ENCODE measurements at regions of chr22 and their contacts with region 1.

Region 1: DNA sequence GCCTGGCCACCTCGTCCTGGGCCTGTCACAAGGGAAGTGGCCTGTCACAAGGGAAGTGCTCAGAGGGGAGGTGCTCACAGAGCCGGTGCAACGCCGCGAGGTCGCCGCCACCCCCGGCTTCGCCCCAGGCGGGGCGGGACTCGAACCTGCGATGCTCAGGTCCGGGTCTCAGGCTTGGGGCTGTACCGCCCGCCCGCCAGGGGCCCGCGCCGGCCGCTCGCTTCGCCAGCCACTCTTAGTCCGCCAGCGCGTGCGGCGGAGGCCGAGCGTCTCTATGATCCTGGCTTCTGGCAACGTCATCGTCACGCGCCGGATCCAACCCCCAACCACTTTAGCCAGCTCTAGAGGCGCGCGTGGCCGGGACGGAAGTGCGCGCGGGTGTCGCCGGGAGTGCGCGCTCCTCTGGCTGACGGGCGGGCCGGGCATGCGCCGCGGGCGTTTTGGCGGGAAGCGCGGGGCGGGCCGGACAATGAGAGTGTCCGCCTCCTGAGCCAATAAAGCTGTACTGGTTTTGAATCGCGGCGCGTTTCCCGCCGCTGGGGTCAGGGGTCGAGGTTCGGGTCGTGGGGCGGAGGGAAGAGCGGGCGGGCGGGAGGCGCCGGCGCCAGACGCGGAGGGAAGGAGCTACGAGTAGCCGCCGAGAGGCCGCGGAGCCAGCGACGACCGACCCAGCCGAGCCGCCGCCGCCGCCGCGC is at the start of gene TRMT2A:
- DNase-seq: peak; percentile 93 to 98 (median 97)
- ATAC-seq: peak; percentile 93
- H3K4me3 ChIP-seq: peak within 1 kb of the TSS; percentile 96
- H3K4me3 Mint-ChIP-seq: peak within 1 kb of the TSS; percentile 72 to 98 (median 90)
- H3K27ac ChIP-seq: peak within 1 kb of the TSS; percentile 96
- H3K27ac Mint-ChIP-seq: peak within 1 kb of the TSS; percentile 80 to 97 (median 95)
- H3K4me1 ChIP-seq: peaks cover 23 to 24% of the 10 kb centered on the region in 2 donors
- H3K4me1 Mint-ChIP-seq: peaks cover 20 to 48% (median 39%) of the 10 kb centered on the region in 7 donors
- H3K27me3 ChIP-seq: no peaks in the 10 kb centered on the region
- H3K27me3 Mint-ChIP-seq: peaks cover 0 to 2% (median 0%) of the 10 kb centered on the region in 5 donors
- total RNA-seq, gene TRMT2A: 92.0 to 134 (median 95.8) TPM

Region 2: DNA sequence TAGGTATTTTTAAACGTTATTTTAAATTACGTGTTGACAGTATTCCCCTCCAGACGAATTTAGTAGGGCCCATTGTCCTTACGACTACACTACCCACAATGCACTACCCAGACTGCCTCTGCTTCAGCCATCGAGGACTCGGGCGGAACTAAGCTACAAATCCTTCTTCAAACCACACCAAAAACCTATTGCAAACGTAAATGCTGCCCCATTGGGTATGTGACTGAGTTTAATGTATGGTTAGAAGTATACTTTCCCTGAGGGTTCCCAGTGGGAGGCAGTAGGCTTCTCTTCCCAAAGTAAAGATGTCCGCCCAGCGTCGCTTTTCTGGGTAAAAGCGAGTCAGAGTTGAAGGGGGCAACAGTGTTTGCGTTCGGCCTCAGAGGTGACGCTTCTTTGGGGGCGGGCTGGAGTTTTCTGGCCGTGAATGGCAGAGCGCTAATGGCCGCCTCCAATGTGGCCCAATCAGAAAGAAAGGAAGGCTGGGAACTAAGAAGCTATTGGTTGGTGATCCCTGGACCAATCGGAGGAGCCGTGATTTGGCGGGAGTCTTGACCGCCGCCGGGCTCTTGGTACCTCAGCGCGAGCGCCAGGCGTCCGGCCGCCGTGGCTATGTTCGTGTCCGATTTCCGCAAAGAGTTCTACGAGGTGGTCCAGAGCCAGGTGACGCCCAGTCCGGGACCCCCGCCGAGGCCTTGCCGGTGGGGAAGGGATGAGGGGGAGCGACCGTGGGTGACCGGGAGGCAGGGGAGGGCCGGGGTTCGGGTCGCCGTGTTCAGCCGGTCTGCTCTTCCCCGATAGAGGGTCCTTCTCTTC is 637.5 kb before region 1 on chr22 and contains the start of gene CDC45:
- CTCF ChIA-PET with region 1: no interaction called
- POLR2A ChIA-PET with region 1: interaction called, 3 read pairs
- intact Hi-C with region 1: loop called in 1 of 2 experiments (anchors 1 kb)
- DNase-seq: peak; percentile 75 to 96 (median 93)
- ATAC-seq: peak; percentile 94
- H3K4me3 ChIP-seq: peak within 1 kb of the TSS; percentile 85
- H3K4me3 Mint-ChIP-seq: peak within 1 kb of the TSS; percentile 87 to 98 (median 92)
- H3K27ac ChIP-seq: peak within 1 kb of the TSS; percentile 96
- H3K27ac Mint-ChIP-seq: peak within 1 kb of the TSS; percentile 98 to 100 (median 99)
- H3K4me1 ChIP-seq: peaks cover 17 to 19% of the 10 kb centered on the region in 2 donors
- H3K4me1 Mint-ChIP-seq: peaks cover 24 to 43% (median 33%) of the 10 kb centered on the region in 7 donors
- H3K27me3 ChIP-seq: no peaks in the 10 kb centered on the region
- H3K27me3 Mint-ChIP-seq: no peaks in the 10 kb centered on the region
- total RNA-seq, gene CDC45: 0.35 to 57.7 (median 0.85) TPM

Region 3: DNA sequence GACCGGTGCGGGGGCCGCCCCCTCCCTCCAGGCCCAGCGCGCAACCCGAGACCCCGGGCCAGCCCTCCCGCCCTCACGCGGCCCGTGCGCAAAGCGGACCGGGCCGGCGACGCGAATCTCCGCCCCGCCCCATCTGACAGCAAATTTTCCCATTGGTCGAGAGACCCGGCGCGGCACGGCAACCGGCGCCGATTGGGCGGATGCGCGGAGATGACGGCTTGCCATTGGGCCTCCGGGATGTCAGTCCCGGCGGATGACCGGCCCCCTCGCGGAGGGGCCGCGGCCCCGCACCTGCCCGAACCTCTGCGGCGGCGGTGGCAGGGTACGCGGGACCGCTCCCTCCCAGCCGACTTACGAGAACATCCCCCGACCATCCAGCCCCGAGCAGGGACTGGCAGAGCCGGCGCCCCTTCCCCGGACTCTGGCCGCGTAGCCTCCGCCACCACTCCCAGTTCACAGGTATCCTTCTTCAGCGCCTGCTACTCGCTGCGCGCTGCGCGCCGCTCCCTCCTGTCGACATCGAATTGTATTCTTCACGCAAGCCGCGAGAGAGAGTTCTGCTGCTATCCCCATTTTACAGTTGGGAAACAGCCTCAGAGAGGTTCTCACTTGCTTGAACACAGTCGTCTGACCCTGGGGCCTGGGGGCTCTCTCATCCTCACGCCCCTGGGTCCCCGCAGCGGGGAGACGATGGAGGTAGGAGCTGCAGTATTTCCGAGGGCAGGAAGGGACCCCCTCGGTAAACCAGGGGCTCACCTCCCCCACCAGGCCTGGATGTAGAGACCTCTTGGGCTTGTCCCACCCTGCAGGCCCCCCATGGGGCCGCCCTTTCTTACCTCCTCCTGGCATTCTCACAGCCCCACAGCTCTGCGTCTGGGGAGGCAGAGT is 100.1 kb before region 1 on chr22 and contains the start of gene ARVCF:
- CTCF ChIA-PET with region 1: no interaction called
- POLR2A ChIA-PET with region 1: interaction called, 10 read pairs
- intact Hi-C with region 1: loop called (anchors 1 to 2 kb)
- DNase-seq: peak; percentile 84 to 95 (median 91)
- ATAC-seq: peak; percentile 74
- H3K4me3 ChIP-seq: peak within 1 kb of the TSS; percentile 78
- H3K4me3 Mint-ChIP-seq: peak within 1 kb of the TSS; percentile 83 to 93 (median 90)
- H3K27ac ChIP-seq: peak within 1 kb of the TSS; percentile 66
- H3K27ac Mint-ChIP-seq: peak within 1 kb of the TSS in 7 of 9 donors; percentile 40 to 81 (median 67)
- H3K4me1 ChIP-seq: peaks cover 11 to 19% of the 10 kb centered on the region in 2 donors
- H3K4me1 Mint-ChIP-seq: peaks cover 3 to 34% (median 22%) of the 10 kb centered on the region in 7 donors
- H3K27me3 ChIP-seq: no peaks in the 10 kb centered on the region
- H3K27me3 Mint-ChIP-seq: peaks cover 0 to 40% (median 0%) of the 10 kb centered on the region in 5 donors
- total RNA-seq, gene ARVCF: 2.8 to 9.2 (median 5.8) TPM

Region 4: GRCh38 chr22:20130739-20131596 is 13.9 kb after region 1 on chr22:
- CTCF ChIA-PET with region 1: interaction called, 3 read pairs
- POLR2A ChIA-PET with region 1: interaction called, 29 read pairs
- intact Hi-C with region 1: loop called (anchors 1 kb)
- DNase-seq: peak; percentile 65 to 77 (median 72)
- ATAC-seq: peak; percentile 88
- H3K4me3 ChIP-seq: peak overlapping the region; percentile 73
- H3K4me3 Mint-ChIP-seq: peak overlapping the region in 8 of 10 donors; percentile 17 to 75 (median 69)
- H3K27ac ChIP-seq: peak overlapping the region; percentile 91
- H3K27ac Mint-ChIP-seq: peak overlapping the region in 6 of 9 donors; percentile 36 to 82 (median 68)
- H3K4me1 ChIP-seq: peaks cover 14 to 20% of the 10 kb centered on the region in 2 donors
- H3K4me1 Mint-ChIP-seq: peaks cover 0 to 33% (median 23%) of the 10 kb centered on the region in 7 donors
- H3K27me3 ChIP-seq: no peaks in the 10 kb centered on the region
- H3K27me3 Mint-ChIP-seq: no peaks in the 10 kb centered on the region

Region 5: GRCh38 chr22:20507253-20508066 is 390.4 kb after region 1 on chr22 and contains the start of gene MED15:
- CTCF ChIA-PET with region 1: no interaction called
- POLR2A ChIA-PET with region 1: no interaction called
- intact Hi-C with region 1: loop called (anchors 1 to 2 kb)
- DNase-seq: peak; percentile 69 to 87 (median 83)
- ATAC-seq: peak; percentile 92
- H3K4me3 ChIP-seq: peak within 1 kb of the TSS; percentile 92
- H3K4me3 Mint-ChIP-seq: peak within 1 kb of the TSS; percentile 96 to 100 (median 98)
- H3K27ac ChIP-seq: peak within 1 kb of the TSS; percentile 95
- H3K27ac Mint-ChIP-seq: peak within 1 kb of the TSS; percentile 90 to 99 (median 96)
- H3K4me1 ChIP-seq: peaks cover 32 to 37% of the 10 kb centered on the region in 2 donors
- H3K4me1 Mint-ChIP-seq: peaks cover 44 to 58% (median 55%) of the 10 kb centered on the region in 7 donors
- H3K27me3 ChIP-seq: no peaks in the 10 kb centered on the region
- H3K27me3 Mint-ChIP-seq: no peaks in the 10 kb centered on the region
- total RNA-seq, gene MED15: 169 to 235 (median 201) TPM

Region 6: DNA sequence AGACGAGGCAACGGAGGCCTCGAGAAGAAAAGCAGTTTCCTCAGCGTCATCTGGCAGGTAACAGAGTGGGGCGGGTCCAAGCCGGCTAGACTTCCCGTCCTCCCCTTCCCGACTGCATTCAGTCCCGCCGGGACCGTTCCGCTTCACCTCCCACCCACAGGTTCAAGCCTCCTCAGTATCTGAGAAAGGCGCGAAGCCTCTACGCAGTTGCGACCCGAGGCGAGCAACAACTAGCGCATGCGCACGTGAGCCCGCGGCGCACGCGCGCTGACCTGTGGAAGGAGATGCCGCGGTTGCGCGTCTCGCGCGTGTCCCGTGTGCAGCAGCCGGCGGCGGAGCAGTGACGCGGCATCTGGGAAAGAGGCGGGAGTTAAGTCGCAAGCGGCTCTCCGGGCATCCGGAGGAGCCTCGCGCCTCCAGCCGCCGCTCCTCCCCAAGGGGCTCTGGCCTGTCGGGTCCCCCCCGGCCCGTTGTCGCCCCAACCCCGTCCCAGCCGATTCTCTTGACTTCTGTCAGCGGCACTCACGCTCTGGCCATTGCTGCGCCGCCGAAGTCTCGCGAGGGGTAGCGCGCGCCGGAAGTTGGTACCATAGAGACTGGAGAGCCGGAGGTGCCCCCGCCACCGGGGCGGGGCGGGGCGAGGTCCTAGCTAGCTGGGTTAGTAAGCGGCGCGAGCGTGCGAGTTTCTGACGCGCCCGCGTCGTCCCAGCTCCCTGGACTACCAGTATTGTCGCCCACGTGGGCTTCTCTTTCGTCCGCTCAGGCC is 884.6 kb after region 1 on chr22 and contains the start of gene THAP7:
- CTCF ChIA-PET with region 1: no interaction called
- POLR2A ChIA-PET with region 1: no interaction called
- intact Hi-C with region 1: loop called in 1 of 2 experiments (anchors 1 kb)
- DNase-seq: peak; percentile 94 to 98 (median 98)
- ATAC-seq: peak; percentile 95
- H3K4me3 ChIP-seq: peak within 1 kb of the TSS; percentile 79
- H3K4me3 Mint-ChIP-seq: peak within 1 kb of the TSS; percentile 94 to 99 (median 96)
- H3K27ac ChIP-seq: peak within 1 kb of the TSS; percentile 94
- H3K27ac Mint-ChIP-seq: peak within 1 kb of the TSS; percentile 98 to 100 (median 99)
- H3K4me1 ChIP-seq: peaks cover 24 to 26% of the 10 kb centered on the region in 2 donors
- H3K4me1 Mint-ChIP-seq: peaks cover 14 to 36% (median 20%) of the 10 kb centered on the region in 7 donors
- H3K27me3 ChIP-seq: no peaks in the 10 kb centered on the region
- H3K27me3 Mint-ChIP-seq: no peaks in the 10 kb centered on the region
- total RNA-seq, gene THAP7: 25.8 to 73.3 (median 64.7) TPM